Kidney (tissue), 22 donors: ENCODE measurements at regions of chr3 and their contacts with region 1.

Region 1: DNA sequence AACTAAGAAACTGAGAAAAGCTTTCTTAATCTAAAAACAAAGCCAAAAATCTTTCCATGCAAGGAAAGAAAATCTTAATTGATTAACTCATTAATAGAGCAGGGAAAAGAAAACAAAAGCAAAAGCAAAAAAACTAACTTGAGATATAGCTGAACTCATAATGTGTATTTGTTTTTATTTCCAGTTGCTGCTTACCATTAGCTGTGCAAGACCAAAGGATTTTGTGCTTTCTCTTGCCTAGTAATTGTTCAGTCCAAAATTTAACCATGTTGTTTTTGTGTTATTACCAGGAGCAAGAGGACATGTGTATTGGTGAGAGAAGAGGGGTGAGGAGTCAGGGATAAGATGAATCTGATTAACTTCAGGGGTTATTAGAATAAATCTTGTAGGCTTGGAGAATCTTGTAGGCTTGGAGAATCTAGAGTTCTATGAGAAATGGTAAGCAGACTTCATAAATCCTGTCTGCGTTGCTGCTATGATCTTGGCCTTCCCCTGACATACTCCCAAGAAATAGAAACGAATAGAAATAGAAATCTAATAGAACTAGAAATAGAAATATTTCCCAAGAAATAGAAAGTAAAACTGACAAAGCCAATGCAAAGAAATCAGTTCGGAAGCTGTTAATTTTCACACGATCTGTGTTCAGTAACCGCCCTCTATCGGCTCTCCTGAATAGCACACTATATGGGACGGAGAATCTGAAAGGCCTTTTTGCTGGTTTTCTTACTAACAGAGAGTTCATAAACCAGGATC is 72.6 kb upstream of the TNFSF10 start:
- DNase-seq: peak in 3 of 5 donors; percentile 22 to 56 (median 56)
- H3K4me3 ChIP-seq: peak overlapping the region in 2 of 3 donors; percentile 48 to 59
- H3K27ac ChIP-seq: peak overlapping the region; percentile 78 to 96
- H3K4me1 ChIP-seq: peaks cover 0 to 25% (median 9%) of the 10 kb centered on the region in 3 donors
- H3K27me3 ChIP-seq: no peaks in the 10 kb centered on the region
- CTCF ChIP-seq: peak; percentile 88

Region 2: GRCh38 chr3:172415323-172415722 is 180.5 kb before region 1 on chr3:
- intact Hi-C with region 1: no loop called
- DNase-seq: no peak
- H3K4me3 ChIP-seq: no peak overlapping the region
- H3K27ac ChIP-seq: no peak overlapping the region
- H3K4me1 ChIP-seq: no peaks in the 10 kb centered on the region
- H3K27me3 ChIP-seq: no peaks in the 10 kb centered on the region
- CTCF ChIP-seq: no peak

Region 3: GRCh38 chr3:172501560-172501959 is 94.3 kb before region 1 on chr3:
- intact Hi-C with region 1: loop called (anchors 10 kb)
- DNase-seq: no peak
- H3K4me3 ChIP-seq: no peak overlapping the region
- H3K27ac ChIP-seq: no peak overlapping the region
- H3K4me1 ChIP-seq: no peaks in the 10 kb centered on the region
- H3K27me3 ChIP-seq: no peaks in the 10 kb centered on the region
- CTCF ChIP-seq: no peak

Region 4: GRCh38 chr3:172824229-172824628 is 228.4 kb after region 1 on chr3:
- intact Hi-C with region 1: no loop called
- DNase-seq: peak in 2 of 5 donors; percentile 12 to 14
- H3K4me3 ChIP-seq: no peak overlapping the region
- H3K27ac ChIP-seq: no peak overlapping the region
- H3K4me1 ChIP-seq: no peaks in the 10 kb centered on the region
- H3K27me3 ChIP-seq: no peaks in the 10 kb centered on the region
- CTCF ChIP-seq: no peak